Tibial artery (tissue), 4 donors: ENCODE measurements at regions of chr11 and their contacts with region 1.

Region 1: DNA sequence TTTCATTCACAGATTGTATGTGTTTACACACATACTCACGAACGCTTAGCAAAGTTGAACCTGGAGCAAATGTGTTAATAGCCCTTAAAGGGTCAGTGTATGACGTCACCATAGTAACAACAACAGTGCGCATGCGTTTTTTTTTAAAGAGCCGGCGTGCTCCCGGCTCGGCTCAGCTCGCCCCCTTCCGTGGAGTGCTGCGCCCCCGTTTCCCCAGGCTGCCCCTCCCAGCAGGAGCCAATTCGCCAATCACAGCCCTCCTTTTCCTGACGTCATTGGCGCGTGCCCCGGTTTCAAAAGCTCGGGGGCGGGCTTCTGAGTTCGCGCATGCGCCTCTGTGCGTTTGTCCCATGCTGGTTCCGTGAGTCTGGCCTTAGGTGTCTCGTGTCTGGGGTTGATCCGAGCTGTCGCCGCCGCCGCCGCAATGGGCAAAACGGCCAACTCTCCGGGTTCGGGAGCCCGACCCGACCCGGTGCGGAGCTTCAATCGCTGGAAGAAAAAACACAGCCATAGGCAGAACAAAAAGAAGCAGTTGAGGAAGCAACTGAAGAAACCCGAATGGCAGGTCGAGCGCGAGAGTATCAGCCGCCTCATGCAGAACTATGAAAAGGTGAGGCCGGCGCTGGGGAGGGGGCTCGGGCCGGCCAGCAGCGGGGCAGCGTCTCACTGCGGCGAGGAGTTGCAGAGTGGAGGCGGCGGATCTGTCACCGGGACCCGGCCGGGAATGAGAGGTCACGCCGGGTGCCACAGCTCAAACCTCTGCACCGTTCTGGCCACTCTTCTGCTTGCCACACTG is at the start of gene DDX10:
- DNase-seq: peak; percentile 97 to 99
- H3K4me3 ChIP-seq: peak within 1 kb of the TSS; percentile 72 to 84
- H3K27ac ChIP-seq: peak within 1 kb of the TSS; percentile 55 to 71
- H3K4me1 ChIP-seq: peaks cover 0 to 36% (median 22%) of the 10 kb centered on the region in 4 donors
- H3K27me3 ChIP-seq: no peaks in the 10 kb centered on the region
- CTCF ChIP-seq: no peak

Region 2: DNA sequence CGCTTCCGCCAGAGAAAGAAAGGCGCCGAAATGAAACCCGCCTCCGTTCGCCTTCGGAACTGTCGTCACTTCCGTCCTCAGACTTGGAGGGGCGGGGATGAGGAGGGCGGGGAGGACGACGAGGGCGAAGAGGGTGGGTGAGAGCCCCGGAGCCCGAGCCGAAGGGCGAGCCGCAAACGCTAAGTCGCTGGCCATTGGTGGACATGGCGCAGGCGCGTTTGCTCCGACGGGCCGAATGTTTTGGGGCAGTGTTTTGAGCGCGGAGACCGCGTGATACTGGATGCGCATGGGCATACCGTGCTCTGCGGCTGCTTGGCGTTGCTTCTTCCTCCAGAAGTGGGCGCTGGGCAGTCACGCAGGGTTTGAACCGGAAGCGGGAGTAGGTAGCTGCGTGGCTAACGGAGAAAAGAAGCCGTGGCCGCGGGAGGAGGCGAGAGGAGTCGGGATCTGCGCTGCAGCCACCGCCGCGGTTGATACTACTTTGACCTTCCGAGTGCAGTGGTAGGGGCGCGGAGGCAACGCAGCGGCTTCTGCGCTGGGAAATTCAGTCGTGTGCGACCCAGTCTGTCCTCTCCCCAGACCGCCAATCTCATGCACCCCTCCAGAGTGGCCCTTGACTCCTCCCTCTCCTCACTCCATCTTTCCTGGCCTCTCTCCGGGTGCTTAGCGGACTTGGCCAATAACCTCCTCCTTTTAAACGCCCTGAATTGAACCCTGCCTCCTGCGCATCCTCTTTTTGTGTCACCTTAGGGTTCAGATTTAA is 442.1 kb before region 1 on chr11 and contains the start of gene ATM:
- intact Hi-C with region 1: loop called (anchors 10 kb)
- DNase-seq: peak; percentile 99 to 100
- H3K4me3 ChIP-seq: peak within 1 kb of the TSS; percentile 72 to 82
- H3K27ac ChIP-seq: peak within 1 kb of the TSS; percentile 90 to 94
- H3K4me1 ChIP-seq: peaks cover 3 to 44% (median 12%) of the 10 kb centered on the region in 4 donors
- H3K27me3 ChIP-seq: no peaks in the 10 kb centered on the region
- CTCF ChIP-seq: peak; percentile 42 to 72

Region 3: DNA sequence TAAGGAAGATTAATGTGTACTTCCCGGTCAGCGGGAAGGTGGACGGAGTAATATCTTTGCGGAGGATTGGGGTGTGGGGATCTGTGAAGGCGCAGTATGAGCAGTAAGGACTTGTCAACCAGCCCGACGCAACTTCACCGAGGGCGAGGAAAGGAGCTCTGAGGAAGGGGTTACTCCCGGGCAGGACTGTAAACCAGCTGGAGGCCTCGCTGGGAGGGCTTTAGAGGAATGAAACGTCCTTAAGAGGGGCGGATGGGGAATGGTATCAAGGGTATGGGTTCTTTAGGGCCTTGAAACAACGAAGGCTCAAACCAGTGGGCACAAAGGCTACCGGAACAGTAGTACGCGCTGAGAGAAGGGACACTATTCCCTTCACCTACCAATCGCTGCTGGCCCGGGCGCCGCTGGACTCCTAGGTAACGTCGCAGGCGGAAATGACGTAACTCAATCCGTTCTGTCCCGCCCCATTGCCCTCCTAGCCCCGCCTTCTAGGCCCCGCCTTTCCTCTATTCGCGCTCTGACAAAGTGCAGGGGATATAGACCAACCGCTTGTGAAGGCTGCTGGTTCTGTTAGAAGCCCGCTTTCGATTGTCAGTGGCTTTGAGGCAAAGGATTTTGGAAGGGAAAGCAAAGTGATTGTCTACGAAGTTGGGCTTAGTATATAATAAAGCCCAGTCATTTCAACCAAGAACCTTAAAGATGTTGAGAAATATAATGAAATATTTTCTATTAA is 197.7 kb before region 1 on chr11 and contains the start of gene C11orf65:
- intact Hi-C with region 1: loop called (anchors 10 kb)
- DNase-seq: peak; percentile 96 to 98
- H3K4me3 ChIP-seq: peak within 1 kb of the TSS; percentile 59 to 65
- H3K27ac ChIP-seq: peak within 1 kb of the TSS; percentile 93 to 94
- H3K4me1 ChIP-seq: peaks cover 0 to 7% (median 2%) of the 10 kb centered on the region in 4 donors
- H3K27me3 ChIP-seq: no peaks in the 10 kb centered on the region
- CTCF ChIP-seq: no peak

Region 4: GRCh38 chr11:108497317-108498045 is 167.4 kb before region 1 on chr11:
- intact Hi-C with region 1: loop called (anchors 10 kb)
- DNase-seq: peak; percentile 93 to 94
- H3K4me3 ChIP-seq: peak overlapping the region; percentile 68 to 96
- H3K27ac ChIP-seq: peak overlapping the region; percentile 87 to 97
- H3K4me1 ChIP-seq: peaks cover 0 to 14% (median 6%) of the 10 kb centered on the region in 4 donors
- H3K27me3 ChIP-seq: no peaks in the 10 kb centered on the region
- CTCF ChIP-seq: no peak

Region 5: GRCh38 chr11:108593214-108593922 is 71.6 kb before region 1 on chr11 and contains the start of gene EXPH5:
- intact Hi-C with region 1: no loop called
- DNase-seq: peak; percentile 80 to 85
- H3K4me3 ChIP-seq: peak within 1 kb of the TSS; percentile 62 to 71
- H3K27ac ChIP-seq: peak within 1 kb of the TSS; percentile 19 to 28
- H3K4me1 ChIP-seq: peaks cover 0 to 16% (median 8%) of the 10 kb centered on the region in 4 donors
- H3K27me3 ChIP-seq: peaks cover 0 to 5% of the 10 kb centered on the region in 2 donors
- CTCF ChIP-seq: no peak

Region 6: GRCh38 chr11:108713076-108713790 is 48.3 kb after region 1 on chr11:
- intact Hi-C with region 1: no loop called
- DNase-seq: no peak
- H3K4me3 ChIP-seq: no peak overlapping the region
- H3K27ac ChIP-seq: no peak overlapping the region
- H3K4me1 ChIP-seq: no peaks in the 10 kb centered on the region
- H3K27me3 ChIP-seq: no peaks in the 10 kb centered on the region
- CTCF ChIP-seq: no peak

Region 7: DNA sequence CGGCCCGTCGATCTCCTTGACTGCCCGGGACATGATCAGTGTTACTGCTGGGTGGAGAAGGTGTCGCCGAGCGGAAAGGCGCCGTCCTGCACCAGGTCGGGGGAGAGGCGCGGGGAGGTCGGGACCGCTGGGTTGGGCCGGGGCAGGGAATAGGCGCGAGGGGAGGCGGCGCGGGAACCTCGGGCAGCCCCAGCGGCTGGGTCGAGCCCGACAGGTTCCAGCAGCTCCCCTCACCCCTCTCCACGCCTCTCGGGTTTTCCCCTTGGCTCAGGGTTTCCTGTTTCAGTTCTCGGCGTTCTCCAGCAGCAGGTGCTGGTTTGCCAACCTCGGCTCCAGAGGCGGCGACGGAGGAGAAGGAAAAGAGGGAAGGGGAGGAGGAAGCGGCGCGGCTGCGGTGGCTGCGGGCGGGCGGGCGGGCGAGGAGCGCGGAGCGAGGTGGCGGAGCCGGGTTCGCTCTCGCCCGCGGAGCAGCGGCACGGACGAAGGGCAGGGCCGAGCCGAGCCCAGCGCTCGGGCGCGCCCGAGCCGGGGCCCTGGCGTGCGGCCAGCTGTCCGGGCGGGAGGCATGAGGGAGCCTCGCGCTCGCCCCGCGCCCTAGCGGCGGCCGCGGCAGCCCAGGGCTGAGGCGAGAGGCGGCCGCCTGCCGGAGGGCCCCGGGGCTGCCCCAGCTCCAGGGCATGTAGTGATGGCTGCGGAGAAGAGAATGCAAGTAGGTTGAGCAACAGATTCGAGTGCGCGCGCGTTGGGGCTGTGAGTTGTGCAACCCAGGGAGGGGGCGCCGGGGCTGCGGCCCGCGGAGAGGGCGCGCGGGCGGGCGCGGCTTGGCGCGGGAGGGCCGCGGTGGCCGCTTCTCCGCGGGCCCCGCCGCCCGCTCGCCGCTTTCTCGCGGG is 1427.8 kb after region 1 on chr11 and contains the start of gene ZC3H12C:
- intact Hi-C with region 1: loop called (anchors 10 kb)
- DNase-seq: peak; percentile 80 to 89
- H3K4me3 ChIP-seq: peak within 1 kb of the TSS; percentile 71 to 85
- H3K27ac ChIP-seq: peak within 1 kb of the TSS; percentile 94 to 96
- H3K4me1 ChIP-seq: peaks cover 0 to 24% (median 7%) of the 10 kb centered on the region in 4 donors
- H3K27me3 ChIP-seq: no peaks in the 10 kb centered on the region
- CTCF ChIP-seq: peak; percentile 45 to 70